Motor neuron (in vitro differentiated cells): ENCODE measurements at regions of chrX and their contacts with region 1.

Region 1: DNA sequence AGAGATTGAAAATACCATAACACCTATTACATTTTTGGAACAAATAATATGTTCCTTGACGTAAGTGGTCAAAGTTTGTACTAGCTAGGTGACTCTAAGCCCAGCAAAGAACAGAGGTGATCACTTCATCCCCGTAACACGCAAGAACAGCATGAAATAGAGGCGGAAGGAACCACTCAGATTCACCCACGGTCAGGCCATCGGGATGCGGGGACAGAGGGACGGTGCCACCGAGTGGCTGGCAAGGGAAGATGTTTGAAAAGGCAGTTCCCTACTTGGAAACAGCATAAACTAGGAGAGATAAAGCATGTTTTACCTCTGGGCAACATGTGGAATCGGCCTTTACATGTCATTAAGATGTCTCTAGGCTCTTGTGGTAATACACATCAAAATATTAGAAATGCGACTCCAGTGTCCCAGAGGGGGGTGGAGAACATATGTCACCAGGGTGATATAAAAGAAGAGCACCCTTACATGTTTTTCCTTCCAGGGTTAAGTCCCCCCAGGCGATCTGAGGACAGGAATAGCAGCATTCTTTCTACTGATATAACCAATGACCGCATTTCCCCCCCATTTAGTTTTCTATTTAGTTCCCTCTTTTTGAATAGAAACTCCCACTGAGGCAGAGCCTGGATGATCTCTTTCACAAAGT is 84.0 kb downstream of the PHKA2 start:
- ATAC-seq: peak in 3 of 8 experiments; percentile 26 to 52 (median 45)
- H3K4me3 ChIP-seq: no peak overlapping the region
- H3K27ac ChIP-seq: no peak overlapping the region
- H3K4me1 ChIP-seq: no peaks in the 10 kb centered on the region

Region 2: GRCh38 chrX:18390941-18391538 is 508.9 kb before region 1 on chrX:
- in situ Hi-C with region 1: loop called in 1 of 9 experiments (anchors 25 kb)
- ATAC-seq: no peak
- H3K4me3 ChIP-seq: no peak overlapping the region
- H3K27ac ChIP-seq: no peak overlapping the region
- H3K4me1 ChIP-seq: no peaks in the 10 kb centered on the region

Region 3: GRCh38 chrX:18424482-18425198 is 475.3 kb before region 1 on chrX:
- in situ Hi-C with region 1: loop called in 3 of 9 experiments (anchors 25 kb)
- ATAC-seq: peak in 5 of 8 experiments; percentile 51 to 61 (median 58)
- H3K4me3 ChIP-seq: peak overlapping the region; percentile 55 to 96 (median 83)
- H3K27ac ChIP-seq: peak overlapping the region; percentile 30 to 78
- H3K4me1 ChIP-seq: peaks cover 0 to 15% of the 10 kb centered on the region in 2 donors

Region 4: GRCh38 chrX:18549643-18550042 is 350.3 kb before region 1 on chrX:
- in situ Hi-C with region 1: no loop called
- ATAC-seq: no peak
- H3K4me3 ChIP-seq: no peak overlapping the region
- H3K27ac ChIP-seq: no peak overlapping the region
- H3K4me1 ChIP-seq: no peaks in the 10 kb centered on the region

Region 5: GRCh38 chrX:19017271-19017670 is 117.3 kb after region 1 on chrX:
- in situ Hi-C with region 1: no loop called
- ATAC-seq: peak in 3 of 8 experiments; percentile 31 to 62 (median 37)
- H3K4me3 ChIP-seq: no peak overlapping the region
- H3K27ac ChIP-seq: no peak overlapping the region
- H3K4me1 ChIP-seq: no peaks in the 10 kb centered on the region